Activated B cell treated with CpG ODN at 0.5 μM for 24 hours (primary cell): ENCODE measurements at regions of chr10 and their contacts with region 1.

Region 1: GRCh38 chr10:97072851-97073665 is 112.7 kb downstream of the SLIT1 start:
- DNase-seq: peak; percentile 69
- ATAC-seq: peak; percentile 76
- H3K4me3 Mint-ChIP-seq: no peak overlapping the region
- H3K27ac Mint-ChIP-seq: no peak overlapping the region
- H3K4me1 Mint-ChIP-seq: no peaks in the 10 kb centered on the region
- H3K27me3 Mint-ChIP-seq: peaks cover 42% of the 10 kb centered on the region
- CTCF ChIP-seq: no peak

Region 2: DNA sequence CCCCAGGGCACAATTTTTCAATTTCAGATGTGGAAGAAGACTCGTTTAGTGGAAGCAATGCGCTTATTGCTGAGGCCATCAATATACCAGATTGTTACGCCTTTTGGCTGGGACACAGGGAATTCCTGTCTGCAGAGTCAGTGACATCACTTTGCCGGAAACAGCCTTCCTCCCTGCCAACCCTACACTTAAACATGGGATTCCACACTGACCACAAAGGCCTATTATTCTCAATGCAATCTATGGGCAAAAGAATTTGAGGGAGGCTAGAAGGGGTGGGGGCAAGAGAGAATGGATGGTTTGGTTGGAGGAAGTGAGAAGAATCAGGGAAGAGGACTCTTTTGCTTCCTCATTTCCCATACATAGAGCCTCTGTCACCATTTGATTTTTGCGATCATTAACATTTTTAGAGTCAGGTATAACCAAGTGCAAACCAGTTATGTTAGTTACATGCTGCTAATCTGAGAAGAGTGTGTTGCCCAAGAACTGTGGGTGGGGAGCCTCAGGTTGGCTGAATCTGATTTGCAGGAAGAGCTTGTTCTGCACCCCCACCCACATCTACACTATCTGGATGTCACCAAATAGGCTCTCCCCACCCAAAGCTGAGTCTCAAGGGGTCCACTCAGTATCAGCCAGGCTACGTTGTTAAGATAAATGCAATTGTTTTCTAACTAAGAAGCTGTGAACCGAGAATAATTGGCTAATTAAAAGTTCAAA is 1258.9 kb before region 1 on chr10:
- CTCF ChIA-PET with region 1: no interaction called
- POLR2A ChIA-PET with region 1: no interaction called
- intact Hi-C with region 1: no loop called
- DNase-seq: no peak
- ATAC-seq: no peak
- H3K4me3 Mint-ChIP-seq: peak overlapping the region; percentile 37
- H3K27ac Mint-ChIP-seq: peak overlapping the region; percentile 67
- H3K4me1 Mint-ChIP-seq: peaks cover 79% of the 10 kb centered on the region
- H3K27me3 Mint-ChIP-seq: no peaks in the 10 kb centered on the region
- CTCF ChIP-seq: no peak

Region 3: DNA sequence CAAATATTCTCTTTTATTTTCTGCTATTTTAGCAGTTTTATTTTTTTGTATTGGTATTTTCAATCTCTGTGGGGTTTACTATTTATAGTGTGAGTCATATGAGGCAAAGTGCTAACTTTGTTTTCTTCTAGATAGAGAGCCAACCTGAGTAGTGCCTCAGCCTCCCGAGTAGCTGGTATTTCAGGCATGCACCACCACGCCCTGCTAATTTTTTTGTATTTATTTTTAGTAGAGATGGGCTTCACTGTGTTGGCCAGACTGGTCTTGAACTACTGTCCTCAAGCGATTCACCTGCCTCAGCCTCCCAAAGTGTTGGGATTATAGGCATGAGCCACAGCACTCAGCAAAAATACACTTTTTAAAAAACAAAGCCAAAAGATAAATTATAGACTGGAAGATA is 285.3 kb before region 1 on chr10:
- CTCF ChIA-PET with region 1: no interaction called
- POLR2A ChIA-PET with region 1: no interaction called
- intact Hi-C with region 1: no loop called
- DNase-seq: no peak
- ATAC-seq: no peak
- H3K4me3 Mint-ChIP-seq: no peak overlapping the region
- H3K27ac Mint-ChIP-seq: no peak overlapping the region
- H3K4me1 Mint-ChIP-seq: peaks cover 26% of the 10 kb centered on the region
- H3K27me3 Mint-ChIP-seq: no peaks in the 10 kb centered on the region
- CTCF ChIP-seq: no peak

Region 4: DNA sequence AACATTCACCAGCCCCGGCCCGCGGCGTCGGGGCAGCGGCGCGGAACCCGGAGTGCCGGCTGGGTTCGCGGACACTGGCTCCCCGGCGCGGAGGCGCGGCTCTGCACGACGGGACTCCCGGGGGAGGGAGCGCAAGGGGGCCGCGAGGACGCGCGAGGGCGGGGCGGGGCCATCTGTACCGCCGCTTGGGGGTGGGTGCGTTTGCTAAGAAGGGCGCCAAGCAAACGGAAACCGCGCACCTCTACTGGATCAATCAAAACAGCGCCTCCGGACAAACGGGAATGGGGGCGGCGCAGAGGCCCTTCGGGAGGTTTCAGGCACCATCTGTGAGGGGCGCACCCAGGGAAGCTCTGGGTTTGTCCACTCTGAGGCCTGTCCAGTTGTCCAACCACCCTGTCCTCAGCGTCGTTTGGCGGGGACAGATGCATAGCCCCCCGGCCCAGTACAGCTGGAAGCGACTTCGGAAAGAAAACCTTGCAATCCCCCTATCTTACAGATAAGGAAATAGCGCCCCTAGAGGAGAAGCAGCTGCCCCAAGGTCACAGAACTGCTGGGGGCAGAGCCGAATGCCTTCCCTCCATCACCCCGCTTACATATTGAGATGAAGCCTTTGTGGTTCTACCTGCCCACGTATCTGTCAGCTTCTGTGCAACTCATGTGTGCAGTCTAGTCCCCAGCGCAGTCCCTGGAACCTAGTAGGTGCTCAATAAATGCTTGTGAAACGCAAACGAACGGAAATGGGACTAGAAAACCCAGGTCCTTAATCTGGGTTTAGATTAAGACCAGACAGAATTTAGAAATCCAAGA is 123.4 kb after region 1 on chr10:
- CTCF ChIA-PET with region 1: interaction called, 11 read pairs
- POLR2A ChIA-PET with region 1: no interaction called
- intact Hi-C with region 1: no loop called
- DNase-seq: peak; percentile 45
- ATAC-seq: peak; percentile 75
- H3K4me3 Mint-ChIP-seq: peak overlapping the region; percentile 82
- H3K27ac Mint-ChIP-seq: no peak overlapping the region
- H3K4me1 Mint-ChIP-seq: peaks cover 33% of the 10 kb centered on the region
- H3K27me3 Mint-ChIP-seq: peaks cover 27% of the 10 kb centered on the region
- CTCF ChIP-seq: peak; percentile 65

Region 5: DNA sequence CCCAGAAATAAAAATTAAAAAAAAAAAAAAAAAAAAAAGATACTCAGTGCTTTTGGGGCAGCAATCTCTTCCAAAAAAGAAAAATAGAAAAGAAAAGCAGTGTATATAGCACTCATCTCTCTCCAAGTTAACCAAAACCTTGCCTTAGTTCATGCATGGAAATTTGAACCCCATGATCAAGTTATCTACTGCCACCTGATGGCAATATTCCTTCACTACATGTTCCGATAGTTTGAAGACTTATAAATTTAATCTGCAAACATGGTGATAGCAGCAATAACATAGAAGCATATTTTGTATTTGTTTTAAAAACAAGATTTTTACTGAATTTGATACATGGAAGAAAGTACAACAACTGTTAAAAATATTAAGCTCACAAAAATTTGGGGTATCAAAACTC is 161.3 kb after region 1 on chr10:
- CTCF ChIA-PET with region 1: interaction called, 17 read pairs
- POLR2A ChIA-PET with region 1: no interaction called
- intact Hi-C with region 1: loop called (anchors 1 kb)
- DNase-seq: no peak
- ATAC-seq: no peak
- H3K4me3 Mint-ChIP-seq: no peak overlapping the region
- H3K27ac Mint-ChIP-seq: no peak overlapping the region
- H3K4me1 Mint-ChIP-seq: peaks cover 3% of the 10 kb centered on the region
- H3K27me3 Mint-ChIP-seq: no peaks in the 10 kb centered on the region
- CTCF ChIP-seq: no peak

Region 6: GRCh38 chr10:97365761-97366351 is 292.8 kb after region 1 on chr10:
- CTCF ChIA-PET with region 1: no interaction called
- POLR2A ChIA-PET with region 1: no interaction called
- intact Hi-C with region 1: loop called (anchors 5 kb)
- DNase-seq: no peak
- ATAC-seq: peak; percentile 85
- H3K4me3 Mint-ChIP-seq: peak overlapping the region; percentile 56
- H3K27ac Mint-ChIP-seq: peak overlapping the region; percentile 90
- H3K4me1 Mint-ChIP-seq: peaks cover 36% of the 10 kb centered on the region
- H3K27me3 Mint-ChIP-seq: no peaks in the 10 kb centered on the region
- CTCF ChIP-seq: no peak